Mammary epithelial cell (primary cell): ENCODE measurements at regions of chr11 and their contacts with region 1.

Region 1: DNA sequence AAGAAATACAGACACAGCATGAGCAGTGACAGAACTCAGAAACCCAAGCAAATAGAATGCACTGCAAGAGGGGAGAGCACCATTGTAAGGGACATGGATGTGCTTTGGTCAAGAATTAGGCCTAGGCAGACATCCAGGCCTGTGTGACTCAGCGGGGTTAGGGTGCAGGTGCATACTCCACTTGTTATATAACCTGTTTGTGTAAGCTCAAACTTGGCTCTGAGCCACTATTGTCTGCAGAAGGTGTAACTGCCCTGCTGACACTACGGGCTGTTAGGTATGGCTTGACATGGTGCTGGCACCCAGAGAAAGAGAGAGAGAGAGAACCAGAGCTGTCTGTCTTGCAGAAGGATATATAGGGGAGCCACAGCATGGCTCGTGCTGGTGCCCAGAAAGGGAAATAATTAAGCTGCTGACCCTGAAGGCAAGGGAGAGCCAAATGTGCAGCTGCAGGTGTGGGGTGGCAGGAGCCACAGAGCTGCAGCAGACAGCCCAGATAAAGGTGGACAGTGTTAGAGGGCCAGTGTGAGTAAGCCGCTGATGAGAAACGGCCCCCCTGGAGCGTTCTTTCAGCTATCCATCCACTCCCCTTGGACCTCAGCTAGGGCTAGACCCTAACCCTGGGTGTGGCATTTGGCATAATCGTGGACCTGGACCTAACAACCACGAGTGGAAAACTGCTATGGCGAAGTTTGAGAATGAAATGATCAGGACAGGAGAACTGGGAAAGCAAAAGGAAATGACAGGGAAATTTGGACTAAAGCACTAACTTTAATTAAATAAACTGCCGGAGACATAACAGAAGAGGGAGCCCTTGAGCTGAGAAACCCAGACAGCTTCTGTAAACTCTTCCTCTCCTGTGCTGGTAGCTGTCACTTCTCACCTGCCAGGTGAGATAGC is 253.0 kb upstream of the CCDC179 start:
- DNase-seq: peak; percentile 41
- H3K4me3 ChIP-seq: no peak overlapping the region
- H3K27ac ChIP-seq: no peak overlapping the region
- H3K4me1 ChIP-seq: no peaks in the 10 kb centered on the region
- H3K27me3 ChIP-seq: no peaks in the 10 kb centered on the region
- CTCF ChIP-seq: peak; percentile 44 to 65

Region 2: GRCh38 chr11:22984045-22984444 is 129.2 kb before region 1 on chr11:
- CTCF ChIA-PET with region 1: no interaction called
- dilution Hi-C with region 1: no loop called
- in situ Hi-C with region 1: no loop called
- intact Hi-C with region 1: no loop called
- DNase-seq: no peak
- H3K4me3 ChIP-seq: no peak overlapping the region
- H3K27ac ChIP-seq: no peak overlapping the region
- H3K4me1 ChIP-seq: no peaks in the 10 kb centered on the region
- H3K27me3 ChIP-seq: no peaks in the 10 kb centered on the region
- CTCF ChIP-seq: no peak

Region 3: DNA sequence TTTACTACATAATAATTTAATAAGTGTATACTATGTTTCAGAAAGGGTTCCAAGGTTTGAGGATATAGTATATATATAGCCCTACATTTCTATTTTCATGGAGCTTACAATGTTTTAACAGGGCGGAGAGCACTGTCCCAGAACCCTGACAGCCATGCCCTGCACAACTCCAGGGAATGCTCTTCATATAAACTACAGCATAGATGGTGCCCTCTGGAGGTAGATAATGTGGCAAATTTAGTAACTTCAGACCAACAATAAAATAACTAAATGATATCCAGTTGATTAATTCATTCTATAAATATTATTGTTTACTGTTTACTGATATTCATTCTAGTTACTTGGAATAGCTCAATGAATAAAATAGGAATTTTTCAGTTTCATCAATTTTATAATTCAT is 440.8 kb after region 1 on chr11:
- CTCF ChIA-PET with region 1: no interaction called
- dilution Hi-C with region 1: no loop called
- in situ Hi-C with region 1: no loop called
- intact Hi-C with region 1: loop called (anchors 1 kb)
- DNase-seq: peak; percentile 2
- H3K4me3 ChIP-seq: no peak overlapping the region
- H3K27ac ChIP-seq: no peak overlapping the region
- H3K4me1 ChIP-seq: no peaks in the 10 kb centered on the region
- H3K27me3 ChIP-seq: no peaks in the 10 kb centered on the region
- CTCF ChIP-seq: peak in 1 of 2 donors; percentile 33